ENCODE measurements at regions of chr20 and their contacts with region 1.

Region 1: DNA sequence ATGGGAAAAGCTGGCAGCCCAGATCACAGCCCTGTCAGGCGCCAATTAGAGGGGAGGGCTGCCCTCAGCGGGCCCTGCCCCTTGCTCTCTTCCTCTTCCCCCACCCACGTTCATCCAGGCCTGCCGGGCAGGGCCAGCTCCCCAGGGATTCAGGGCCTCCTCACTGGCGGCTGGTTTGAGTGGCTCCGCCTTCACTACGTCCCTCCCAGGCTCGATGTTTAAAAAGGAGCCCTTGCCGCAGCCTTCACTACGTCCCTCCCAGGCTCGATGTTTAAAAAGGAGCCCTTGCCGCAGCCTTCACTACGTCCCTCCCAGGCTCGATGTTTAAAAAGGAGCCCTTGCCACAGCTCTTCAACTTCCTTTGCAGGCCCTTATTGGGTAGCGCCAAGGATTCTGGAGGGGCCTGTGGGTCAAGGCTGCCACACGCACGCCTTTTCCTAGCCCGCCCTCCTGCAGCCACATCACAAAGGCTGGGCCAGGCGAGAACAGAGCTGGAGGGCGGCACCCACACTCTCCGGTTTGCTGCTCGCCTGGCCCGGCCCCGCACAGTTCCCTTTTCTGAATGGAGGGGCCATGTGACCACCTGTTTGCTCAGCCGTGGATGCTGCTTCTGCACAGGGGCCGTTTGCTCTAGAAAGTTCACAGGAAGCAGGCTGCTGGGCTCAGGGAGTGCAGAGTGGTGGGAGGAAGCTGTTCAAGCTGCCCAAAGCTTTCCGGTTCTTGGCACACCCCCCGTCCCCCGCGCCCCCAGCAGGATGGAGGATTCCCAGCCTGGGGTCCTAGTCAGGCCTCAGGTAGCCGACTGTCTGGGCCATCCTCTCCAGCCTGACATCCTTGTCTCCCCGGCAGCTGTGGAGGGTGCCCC is 1.6 kb downstream of the SLC17A9 start:
- DNase-seq: peak; percentile 74
- ATAC-seq: peak; percentile 82
- H3K4me3 Mint-ChIP-seq: peak overlapping the region; percentile 69
- H3K27ac Mint-ChIP-seq: peak overlapping the region; percentile 85
- H3K4me1 Mint-ChIP-seq: peaks cover 25% of the 10 kb centered on the region
- H3K27me3 Mint-ChIP-seq: no peaks in the 10 kb centered on the region

Region 2: DNA sequence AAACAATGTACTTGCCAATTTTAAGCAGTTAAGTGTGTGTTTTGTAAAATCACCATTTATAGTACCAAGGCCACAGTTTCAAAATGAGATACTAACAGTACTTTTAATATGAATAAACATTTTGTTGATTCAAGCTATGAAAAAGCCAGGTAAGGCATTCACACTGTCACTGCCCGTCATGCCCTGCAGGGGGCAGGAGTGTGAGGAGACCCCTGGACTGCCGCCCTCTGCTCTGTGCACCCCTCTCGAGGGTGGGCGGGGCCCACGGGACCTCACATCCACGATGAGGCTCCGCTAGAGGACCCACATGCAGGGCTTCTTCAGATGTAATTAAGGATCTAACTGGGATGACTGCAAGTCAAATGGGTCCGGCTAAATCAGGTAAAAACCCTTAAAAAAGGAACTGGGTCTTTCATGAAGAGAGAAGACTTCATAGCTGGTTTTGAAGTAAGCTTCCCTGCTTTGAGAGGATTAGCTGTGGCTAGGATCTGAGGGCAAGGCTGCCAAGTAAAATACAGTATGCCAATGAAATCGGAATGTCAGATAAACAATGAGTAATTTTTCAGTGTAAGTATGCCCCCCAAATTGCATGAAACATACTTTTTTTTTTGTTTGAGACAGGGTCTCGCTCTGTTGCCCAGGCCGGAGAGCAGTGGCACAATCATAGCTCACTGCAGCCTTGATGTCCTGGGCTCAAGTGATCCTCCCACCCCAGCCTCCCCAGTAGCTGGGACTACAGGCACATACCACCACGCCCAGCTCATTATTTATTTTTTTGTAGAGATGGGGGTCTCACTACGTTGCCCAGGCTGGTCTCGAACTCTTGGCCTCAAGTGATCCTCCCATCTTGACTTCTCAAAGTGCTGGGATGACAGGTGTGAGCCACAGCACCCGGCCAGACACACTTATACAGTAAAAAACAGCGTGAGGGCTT is 46.4 kb before region 1 on chr20:
- CTCF ChIA-PET with region 1: interaction called, 10 read pairs
- POLR2A ChIA-PET with region 1: no interaction called
- intact Hi-C with region 1: no loop called
- DNase-seq: peak; percentile 62
- ATAC-seq: peak; percentile 76
- H3K4me3 Mint-ChIP-seq: no peak overlapping the region
- H3K27ac Mint-ChIP-seq: peak overlapping the region; percentile 58
- H3K4me1 Mint-ChIP-seq: peaks cover 11% of the 10 kb centered on the region
- H3K27me3 Mint-ChIP-seq: no peaks in the 10 kb centered on the region

Region 3: GRCh38 chr20:63106108-63106764 is 152.2 kb after region 1 on chr20:
- CTCF ChIA-PET with region 1: no interaction called
- POLR2A ChIA-PET with region 1: no interaction called
- intact Hi-C with region 1: no loop called
- DNase-seq: no peak
- ATAC-seq: no peak
- H3K4me3 Mint-ChIP-seq: no peak overlapping the region
- H3K27ac Mint-ChIP-seq: no peak overlapping the region
- H3K4me1 Mint-ChIP-seq: peaks cover 5% of the 10 kb centered on the region
- H3K27me3 Mint-ChIP-seq: no peaks in the 10 kb centered on the region

Measured in activated CD4-positive, alpha-beta T cell treated with anti-CD3 and anti-CD28 coated beads for 36 hours (primary cell).